ENCODE measurements at regions of chr20 and their contacts with region 1.

Region 1: GRCh38 chr20:21571841-21572690 is 58.2 kb upstream of the NKX2-2 start:
- DNase-seq: peak; percentile 28
- H3K4me3 Mint-ChIP-seq: no peak overlapping the region
- H3K27ac Mint-ChIP-seq: no peak overlapping the region
- H3K4me1 Mint-ChIP-seq: no peaks in the 10 kb centered on the region
- H3K27me3 Mint-ChIP-seq: peaks cover 34% of the 10 kb centered on the region
- CTCF ChIP-seq: peak; percentile 90

Region 2: DNA sequence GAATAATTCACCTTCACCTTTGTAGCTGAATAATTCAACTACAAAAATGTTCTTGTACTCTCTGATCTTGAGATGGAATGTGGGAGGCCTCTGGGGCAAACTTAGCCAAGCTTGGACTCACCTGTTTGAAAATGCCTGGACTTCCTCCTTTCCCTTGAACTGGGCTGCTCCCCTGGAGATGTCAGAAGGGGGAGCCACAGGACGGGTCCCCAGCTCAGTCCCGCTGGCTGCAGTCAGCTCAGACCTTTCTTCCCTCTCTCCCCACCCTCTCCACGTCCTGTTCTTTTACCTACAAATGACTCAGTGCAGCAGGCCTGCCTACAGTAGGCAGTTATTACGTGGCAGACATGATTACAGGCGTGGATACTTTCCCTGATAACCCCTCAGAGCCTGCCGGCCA is 728.1 kb before region 1 on chr20:
- CTCF ChIA-PET with region 1: interaction called, 49 read pairs
- POLR2A ChIA-PET with region 1: no interaction called
- intact Hi-C with region 1: no loop called
- DNase-seq: peak; percentile 23
- H3K4me3 Mint-ChIP-seq: no peak overlapping the region
- H3K27ac Mint-ChIP-seq: no peak overlapping the region
- H3K4me1 Mint-ChIP-seq: no peaks in the 10 kb centered on the region
- H3K27me3 Mint-ChIP-seq: no peaks in the 10 kb centered on the region
- CTCF ChIP-seq: no peak

Region 3: GRCh38 chr20:21529863-21530262 is 42.2 kb before region 1 on chr20:
- CTCF ChIA-PET with region 1: interaction called, 34 read pairs
- POLR2A ChIA-PET with region 1: interaction called, 6 read pairs
- intact Hi-C with region 1: loop called (anchors 1 kb)
- DNase-seq: peak; percentile 39
- H3K4me3 Mint-ChIP-seq: no peak overlapping the region
- H3K27ac Mint-ChIP-seq: no peak overlapping the region
- H3K4me1 Mint-ChIP-seq: no peaks in the 10 kb centered on the region
- H3K27me3 Mint-ChIP-seq: peaks cover 32% of the 10 kb centered on the region
- CTCF ChIP-seq: peak; percentile 46

Region 4: DNA sequence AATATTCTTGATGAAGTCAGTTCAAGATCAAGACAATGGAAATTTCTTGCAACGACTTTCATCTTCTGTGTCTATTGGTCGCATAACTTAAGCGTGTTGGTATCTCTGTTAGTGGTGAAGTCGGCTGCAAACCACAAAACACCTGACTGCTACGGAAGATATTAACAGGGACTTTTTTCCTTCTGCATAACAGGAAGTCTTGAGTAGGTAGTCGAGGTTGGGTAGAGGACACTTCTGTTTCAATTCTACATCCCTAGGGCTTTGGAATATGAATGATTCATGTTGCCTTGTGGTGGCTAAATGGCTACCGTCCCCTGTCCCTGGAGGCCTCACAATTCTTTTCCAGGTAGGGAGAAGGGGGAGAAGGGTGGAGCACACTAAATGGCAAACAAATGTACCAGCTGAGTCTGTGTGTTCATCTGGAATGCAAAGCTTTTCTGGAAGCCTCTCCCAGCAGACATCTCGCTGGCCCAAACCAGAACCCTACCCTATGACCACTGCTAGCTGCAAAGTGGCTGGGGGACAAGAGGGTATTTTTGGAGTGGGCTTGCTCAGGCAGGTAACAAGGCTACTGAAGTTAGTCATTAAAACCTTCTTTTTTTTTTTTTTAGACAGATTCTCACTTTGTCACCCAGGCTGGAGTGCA is 23.6 kb before region 1 on chr20:
- CTCF ChIA-PET with region 1: interaction called, 99 read pairs
- POLR2A ChIA-PET with region 1: no interaction called
- intact Hi-C with region 1: no loop called
- DNase-seq: no peak
- H3K4me3 Mint-ChIP-seq: no peak overlapping the region
- H3K27ac Mint-ChIP-seq: no peak overlapping the region
- H3K4me1 Mint-ChIP-seq: no peaks in the 10 kb centered on the region
- H3K27me3 Mint-ChIP-seq: peaks cover 13% of the 10 kb centered on the region
- CTCF ChIP-seq: no peak

Region 5: GRCh38 chr20:21583486-21584168 is 11.6 kb after region 1 on chr20:
- CTCF ChIA-PET with region 1: interaction called, 35 read pairs
- POLR2A ChIA-PET with region 1: interaction called, 3 read pairs
- intact Hi-C with region 1: no loop called
- DNase-seq: no peak
- H3K4me3 Mint-ChIP-seq: no peak overlapping the region
- H3K27ac Mint-ChIP-seq: no peak overlapping the region
- H3K4me1 Mint-ChIP-seq: no peaks in the 10 kb centered on the region
- H3K27me3 Mint-ChIP-seq: peaks cover 40% of the 10 kb centered on the region
- CTCF ChIP-seq: no peak